Uterus (tissue), 4 donors: ENCODE measurements at regions of chr19 and their contacts with region 1.

Region 1: GRCh38 chr19:1189419-1189818 is 15.4 kb upstream of the SBNO2 start:
- DNase-seq: no peak
- H3K4me3 ChIP-seq: no peak overlapping the region
- H3K27ac ChIP-seq: no peak overlapping the region
- H3K4me1 ChIP-seq: no peaks in the 10 kb centered on the region
- H3K27me3 ChIP-seq: no peaks in the 10 kb centered on the region
- CTCF ChIP-seq: no peak
- POLR2A ChIP-seq: no peak

Region 2: GRCh38 chr19:1019980-1020867 is 169.2 kb before region 1 on chr19:
- intact Hi-C with region 1: loop called (anchors 5 kb)
- DNase-seq: peak; percentile 56
- H3K4me3 ChIP-seq: peak overlapping the region; percentile 72 to 90
- H3K27ac ChIP-seq: peak overlapping the region; percentile 90 to 95
- H3K4me1 ChIP-seq: peaks cover 6 to 39% of the 10 kb centered on the region in 2 donors
- H3K27me3 ChIP-seq: no peaks in the 10 kb centered on the region
- CTCF ChIP-seq: no peak
- POLR2A ChIP-seq: no peak

Region 3: GRCh38 chr19:1113033-1113985 is 76.1 kb before region 1 on chr19:
- intact Hi-C with region 1: loop called (anchors 5 kb)
- DNase-seq: peak; percentile 95 to 97
- H3K4me3 ChIP-seq: no peak overlapping the region
- H3K27ac ChIP-seq: peak overlapping the region; percentile 71 to 72
- H3K4me1 ChIP-seq: peaks cover 5 to 7% of the 10 kb centered on the region in 2 donors
- H3K27me3 ChIP-seq: no peaks in the 10 kb centered on the region
- CTCF ChIP-seq: peak; percentile 96 to 97 (median 96)
- POLR2A ChIP-seq: peak; percentile 27 to 39